Ovary (tissue), 10 donors: ENCODE measurements at regions of chr9 and their contacts with region 1.

Region 1: GRCh38 chr9:126781186-126782052 is 23.4 kb upstream of the ZBTB43 start:
- DNase-seq: peak; percentile 57 to 85 (median 76)
- H3K4me3 ChIP-seq: no peak overlapping the region
- H3K27ac ChIP-seq: no peak overlapping the region
- H3K4me1 ChIP-seq: no peaks in the 10 kb centered on the region
- H3K27me3 ChIP-seq: no peaks in the 10 kb centered on the region
- CTCF ChIP-seq: peak; percentile 34 to 71 (median 63)
- EP300 ChIP-seq: no peak
- POLR2A ChIP-seq: no peak

Region 2: GRCh38 chr9:125436458-125437443 is 1344.7 kb before region 1 on chr9:
- intact Hi-C with region 1: no loop called
- DNase-seq: peak in 1 of 5 donors; percentile 11
- H3K4me3 ChIP-seq: no peak overlapping the region
- H3K27ac ChIP-seq: no peak overlapping the region
- H3K4me1 ChIP-seq: no peaks in the 10 kb centered on the region
- H3K27me3 ChIP-seq: no peaks in the 10 kb centered on the region
- CTCF ChIP-seq: no peak
- EP300 ChIP-seq: no peak
- POLR2A ChIP-seq: no peak

Region 3: GRCh38 chr9:126500684-126501382 is 280.6 kb before region 1 on chr9:
- intact Hi-C with region 1: loop called (anchors 5 to 10 kb)
- DNase-seq: peak; percentile 75 to 87 (median 84)
- H3K4me3 ChIP-seq: no peak overlapping the region
- H3K27ac ChIP-seq: no peak overlapping the region
- H3K4me1 ChIP-seq: peaks cover 5% of the 10 kb centered on the region
- H3K27me3 ChIP-seq: no peaks in the 10 kb centered on the region
- CTCF ChIP-seq: peak; percentile 85 to 98 (median 91)
- EP300 ChIP-seq: no peak
- POLR2A ChIP-seq: no peak

Region 4: DNA sequence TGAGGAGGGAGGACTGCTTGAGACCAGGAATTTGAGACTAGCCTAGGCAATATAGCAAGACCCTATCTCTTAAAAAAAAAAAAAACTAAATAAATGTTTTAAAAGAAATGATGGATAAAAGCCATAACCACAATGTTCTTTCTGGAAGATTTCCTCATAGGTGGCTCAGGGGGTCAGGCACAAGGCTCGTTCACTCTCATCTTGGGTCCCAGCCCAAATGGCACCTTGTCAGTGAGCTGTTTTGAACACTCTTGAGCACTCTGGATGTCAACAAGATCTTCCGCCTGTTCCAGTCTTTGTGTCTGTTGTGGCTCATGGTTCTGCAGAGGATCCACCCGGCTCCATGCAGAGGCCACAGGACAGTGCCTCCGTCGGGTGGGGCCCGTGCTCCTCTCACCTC is 203.4 kb before region 1 on chr9:
- intact Hi-C with region 1: no loop called
- DNase-seq: no peak
- H3K4me3 ChIP-seq: no peak overlapping the region
- H3K27ac ChIP-seq: no peak overlapping the region
- H3K4me1 ChIP-seq: no peaks in the 10 kb centered on the region
- H3K27me3 ChIP-seq: no peaks in the 10 kb centered on the region
- CTCF ChIP-seq: no peak
- EP300 ChIP-seq: no peak
- POLR2A ChIP-seq: no peak

Region 5: GRCh38 chr9:126611592-126612325 is 169.7 kb before region 1 on chr9:
- intact Hi-C with region 1: loop called in 3 of 4 experiments (anchors 5 to 10 kb)
- DNase-seq: peak; percentile 50 to 79 (median 57)
- H3K4me3 ChIP-seq: no peak overlapping the region
- H3K27ac ChIP-seq: no peak overlapping the region
- H3K4me1 ChIP-seq: peaks cover 10% of the 10 kb centered on the region
- H3K27me3 ChIP-seq: no peaks in the 10 kb centered on the region
- CTCF ChIP-seq: peak in 2 of 3 donors; percentile 42 to 45
- EP300 ChIP-seq: no peak
- POLR2A ChIP-seq: no peak

Region 6: GRCh38 chr9:126704873-126705766 is 76.3 kb before region 1 on chr9:
- intact Hi-C with region 1: loop called in 1 of 4 experiments (anchors 2 kb)
- DNase-seq: peak; percentile 68 to 85 (median 77)
- H3K4me3 ChIP-seq: no peak overlapping the region
- H3K27ac ChIP-seq: no peak overlapping the region
- H3K4me1 ChIP-seq: peaks cover 3% of the 10 kb centered on the region
- H3K27me3 ChIP-seq: no peaks in the 10 kb centered on the region
- CTCF ChIP-seq: peak; percentile 69 to 79 (median 73)
- EP300 ChIP-seq: no peak
- POLR2A ChIP-seq: no peak

Region 7: DNA sequence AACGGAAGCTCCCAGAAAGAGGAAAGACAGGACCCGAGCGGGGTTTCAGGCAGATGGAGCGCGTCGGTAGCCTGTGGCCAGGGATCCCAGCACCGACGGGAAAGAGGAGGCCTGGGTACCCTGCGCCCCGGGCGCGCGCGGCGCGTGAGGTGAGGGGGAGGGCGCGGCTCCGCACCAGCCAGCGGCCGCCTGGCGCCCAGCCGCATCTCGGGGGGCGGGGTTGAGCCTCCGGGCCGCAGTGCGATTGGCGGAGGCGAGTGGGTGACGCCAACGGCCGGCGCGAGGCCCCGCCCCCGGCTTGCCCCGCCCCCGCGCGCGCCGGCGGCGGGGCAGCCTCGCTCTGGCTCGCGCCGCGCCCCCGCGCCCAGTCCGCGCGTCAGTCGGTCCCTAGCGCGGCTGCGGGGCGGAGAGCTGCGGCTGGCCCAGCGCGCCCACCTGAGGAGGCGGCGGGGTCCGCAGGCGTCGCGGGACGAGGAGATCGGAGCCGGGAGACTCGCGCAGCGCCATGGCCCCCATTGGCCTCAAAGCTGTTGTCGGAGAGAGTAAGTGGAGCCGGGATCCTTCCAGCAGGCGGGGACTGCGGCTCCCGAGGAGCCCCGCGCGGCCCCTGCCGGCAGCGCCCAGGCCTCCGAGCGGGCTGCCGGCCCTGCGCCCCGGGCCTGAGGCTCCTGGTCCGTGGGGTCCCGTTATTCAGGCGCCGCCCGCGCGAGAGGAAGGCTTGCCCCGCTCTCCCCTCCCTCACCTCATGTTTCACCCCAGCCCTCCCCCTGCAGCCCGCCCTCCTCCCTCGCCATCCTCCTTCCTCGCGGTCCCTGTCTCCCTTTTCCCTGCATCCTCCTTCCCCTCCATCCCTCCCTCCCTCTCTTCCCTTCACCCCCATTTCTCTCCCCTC is 830.7 kb after region 1 on chr9 and contains the start of gene STXBP1:
- intact Hi-C with region 1: no loop called
- DNase-seq: peak; percentile 90 to 96 (median 94)
- H3K4me3 ChIP-seq: peak within 1 kb of the TSS; percentile 71
- H3K27ac ChIP-seq: peak within 1 kb of the TSS; percentile 84 to 96
- H3K4me1 ChIP-seq: peaks cover 9% of the 10 kb centered on the region
- H3K27me3 ChIP-seq: no peaks in the 10 kb centered on the region
- CTCF ChIP-seq: peak in 1 of 3 donors; percentile 60
- EP300 ChIP-seq: no peak
- POLR2A ChIP-seq: peak; percentile 95
- total RNA-seq, gene STXBP1: 46.8 to 102 (median 75.7) TPM